IMR-90 (cell line): ENCODE measurements at regions of chr7 and their contacts with region 1.

Region 1: DNA sequence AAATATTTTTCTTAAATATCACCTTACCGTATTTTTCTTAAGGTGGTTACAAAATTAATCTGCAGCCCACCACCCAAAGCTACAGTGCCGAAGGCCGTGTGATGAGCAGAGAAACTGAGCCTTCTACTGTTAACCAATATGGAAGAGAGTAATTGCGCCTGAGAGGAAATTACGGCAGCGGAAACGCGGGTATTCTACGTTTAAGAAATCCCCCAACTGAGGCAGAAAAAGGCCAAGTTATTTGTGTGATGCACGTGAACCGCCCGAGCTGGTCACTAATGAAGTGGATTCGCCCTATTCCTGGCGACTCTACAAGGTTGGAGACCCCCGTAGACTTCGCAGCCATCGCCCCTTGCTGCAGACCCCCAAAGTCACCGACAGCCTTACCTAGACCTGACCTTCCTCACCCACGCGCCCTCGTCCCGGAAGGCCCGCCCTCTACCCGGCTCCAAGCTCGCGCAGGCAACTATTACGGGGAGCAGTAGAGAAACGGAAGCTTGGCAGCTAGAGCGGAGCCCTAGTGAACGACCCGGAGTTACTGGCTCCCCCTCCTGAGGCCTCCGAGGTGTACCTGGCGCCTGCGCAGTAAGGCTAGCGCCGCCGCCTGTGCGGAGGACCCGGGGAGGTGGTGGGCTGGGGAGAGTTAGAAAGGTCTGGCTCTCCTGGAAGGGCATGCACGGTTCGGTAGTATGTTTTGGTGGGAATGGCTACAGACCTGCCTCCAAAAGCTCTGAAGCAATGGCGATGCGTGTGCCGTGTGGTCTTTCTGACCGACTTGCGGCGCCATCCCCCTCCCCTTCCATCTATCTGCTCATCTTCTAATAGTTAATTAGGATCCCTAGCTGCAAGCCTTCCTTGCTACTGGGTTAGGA is at the start of gene MRPS33:
- DNase-seq: peak; percentile 94
- ATAC-seq: peak; percentile 100
- H3K4me3 ChIP-seq: peak within 1 kb of the TSS; percentile 71
- H3K27ac ChIP-seq: peak within 1 kb of the TSS; percentile 85
- H3K4me1 ChIP-seq: peaks cover 2% of the 10 kb centered on the region; the same call in 1 of the 2 replicates
- H3K27me3 ChIP-seq: no peaks in the 10 kb centered on the region
- CTCF ChIP-seq: peak; percentile 87
- POLR2A ChIP-seq: peak; percentile 78
- RAD21 ChIP-seq: no peak
- total RNA-seq, gene MRPS33: 14.5 and 24.4 TPM in 2 replicates

Region 2: GRCh38 chr7:140517546-140518369 is 497.0 kb before region 1 on chr7:
- CTCF ChIA-PET with region 1: no interaction called
- POLR2A ChIA-PET with region 1: no interaction called
- dilution Hi-C with region 1: no loop called
- in situ Hi-C with region 1: loop called (anchors 25 kb)
- intact Hi-C with region 1: no loop called
- DNase-seq: peak; percentile 89
- ATAC-seq: peak; percentile 97
- H3K4me3 ChIP-seq: no peak overlapping the region
- H3K27ac ChIP-seq: no peak overlapping the region
- H3K4me1 ChIP-seq: 0 out of 2 replicates have a peak, but pooled peaks cover 2% of the 10 kb centered on the region
- H3K27me3 ChIP-seq: no peaks in the 10 kb centered on the region
- CTCF ChIP-seq: peak; percentile 94
- POLR2A ChIP-seq: peak; percentile 49; the same call in 1 of the 2 replicates
- RAD21 ChIP-seq: peak; percentile 98

Region 3: GRCh38 chr7:140673063-140673773 is 341.5 kb before region 1 on chr7:
- CTCF ChIA-PET with region 1: interaction called, 7 read pairs
- POLR2A ChIA-PET with region 1: no interaction called
- dilution Hi-C with region 1: no loop called
- in situ Hi-C with region 1: no loop called
- intact Hi-C with region 1: loop called (anchors 1 kb)
- DNase-seq: no peak
- ATAC-seq: peak; percentile 81
- H3K4me3 ChIP-seq: peak overlapping the region; percentile 71
- H3K27ac ChIP-seq: no peak overlapping the region; the same call in 1 of the 2 replicates
- H3K4me1 ChIP-seq: 0 out of 2 replicates have a peak, but pooled peaks cover 2% of the 10 kb centered on the region
- H3K27me3 ChIP-seq: peaks cover 6% of the 10 kb centered on the region; the same call in 1 of the 2 replicates
- CTCF ChIP-seq: no peak
- POLR2A ChIP-seq: no peak
- RAD21 ChIP-seq: no peak

Region 4: GRCh38 chr7:141072548-141073172 is 57.9 kb after region 1 on chr7:
- CTCF ChIA-PET with region 1: interaction called, 3 read pairs
- POLR2A ChIA-PET with region 1: no interaction called
- dilution Hi-C with region 1: no loop called
- in situ Hi-C with region 1: no loop called
- intact Hi-C with region 1: loop called (anchors 2 kb)
- DNase-seq: peak; percentile 73
- ATAC-seq: peak; percentile 60
- H3K4me3 ChIP-seq: peak overlapping the region; percentile 47
- H3K27ac ChIP-seq: no peak overlapping the region
- H3K4me1 ChIP-seq: peaks cover 1% of the 10 kb centered on the region; the same call in 1 of the 2 replicates
- H3K27me3 ChIP-seq: peaks cover 44% of the 10 kb centered on the region
- CTCF ChIP-seq: no peak
- POLR2A ChIP-seq: no peak
- RAD21 ChIP-seq: no peak

Region 5: DNA sequence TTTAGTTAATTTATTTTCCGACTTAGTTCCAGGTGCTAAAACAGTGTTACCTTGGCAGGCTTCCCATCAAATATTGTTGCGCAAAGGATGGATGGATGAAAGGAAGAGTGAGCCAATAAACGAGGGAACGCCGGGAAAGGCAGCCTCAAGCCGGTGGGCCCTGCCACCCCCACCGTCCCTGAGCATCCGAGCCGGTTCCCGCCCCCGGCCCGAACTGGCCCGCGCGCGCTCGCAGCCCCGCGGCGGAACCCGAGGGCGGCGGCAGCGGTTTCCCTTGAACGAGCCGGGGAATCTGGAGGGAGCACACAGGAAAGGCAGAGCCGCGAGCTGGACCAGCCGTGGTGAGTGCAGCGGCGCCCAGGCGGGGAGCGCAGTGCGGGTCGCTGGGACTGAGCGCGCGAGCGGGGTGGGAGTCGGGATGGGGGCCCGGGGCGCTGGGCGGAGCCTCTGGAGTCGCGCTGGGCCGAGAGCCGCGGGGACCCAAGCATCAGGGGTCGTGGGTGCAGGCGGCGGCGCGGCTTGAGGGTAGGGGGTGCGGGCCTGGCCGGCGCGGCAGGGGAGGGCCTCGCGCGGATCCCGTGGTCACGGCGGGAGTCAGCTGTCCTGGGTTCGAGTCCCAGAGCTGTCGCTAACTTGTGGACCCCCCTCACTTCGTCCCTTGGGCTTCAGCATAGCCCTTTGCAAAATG is 536.5 kb after region 1 on chr7 and contains the start of gene AGK:
- CTCF ChIA-PET with region 1: no interaction called
- POLR2A ChIA-PET with region 1: no interaction called
- dilution Hi-C with region 1: no loop called
- in situ Hi-C with region 1: no loop called
- intact Hi-C with region 1: loop called (anchors 1 kb)
- DNase-seq: peak; percentile 75
- ATAC-seq: peak; percentile 99
- H3K4me3 ChIP-seq: peak within 1 kb of the TSS; percentile 98
- H3K27ac ChIP-seq: peak within 1 kb of the TSS; percentile 46
- H3K4me1 ChIP-seq: peaks cover 3% of the 10 kb centered on the region; the same call in 1 of the 2 replicates
- H3K27me3 ChIP-seq: no peaks in the 10 kb centered on the region
- CTCF ChIP-seq: no peak
- POLR2A ChIP-seq: peak; percentile 67
- RAD21 ChIP-seq: no peak; the same call in 1 of the 2 replicates
- total RNA-seq, gene AGK: 37.3 and 37.5 TPM in 2 replicates

Region 6: GRCh38 chr7:141737834-141738591 is 723.3 kb after region 1 on chr7 and contains the start of gene SSBP1:
- CTCF ChIA-PET with region 1: no interaction called
- POLR2A ChIA-PET with region 1: no interaction called
- dilution Hi-C with region 1: no loop called
- in situ Hi-C with region 1: no loop called
- intact Hi-C with region 1: loop called (anchors 1 kb)
- DNase-seq: peak; percentile 96
- ATAC-seq: peak; percentile 97
- H3K4me3 ChIP-seq: peak within 1 kb of the TSS; percentile 65
- H3K27ac ChIP-seq: peak within 1 kb of the TSS; percentile 70
- H3K4me1 ChIP-seq: no peaks in the 10 kb centered on the region; the same call in 1 of the 2 replicates
- H3K27me3 ChIP-seq: no peaks in the 10 kb centered on the region
- CTCF ChIP-seq: peak; percentile 96
- POLR2A ChIP-seq: peak; percentile 88
- RAD21 ChIP-seq: peak; percentile 36
- total RNA-seq, gene SSBP1: 204 and 234 TPM in 2 replicates